ENCODE measurements at regions of chr4 and their contacts with region 1.

Region 1: GRCh38 chr4:12270546-12270945 is 841.9 kb upstream of the HS3ST1 start:
- DNase-seq: no peak
- H3K4me3 ChIP-seq: no peak overlapping the region
- H3K27ac ChIP-seq: no peak overlapping the region
- H3K4me1 ChIP-seq: no peaks in the 10 kb centered on the region
- H3K27me3 ChIP-seq: no peaks in the 10 kb centered on the region
- CTCF ChIP-seq: no peak

Region 2: DNA sequence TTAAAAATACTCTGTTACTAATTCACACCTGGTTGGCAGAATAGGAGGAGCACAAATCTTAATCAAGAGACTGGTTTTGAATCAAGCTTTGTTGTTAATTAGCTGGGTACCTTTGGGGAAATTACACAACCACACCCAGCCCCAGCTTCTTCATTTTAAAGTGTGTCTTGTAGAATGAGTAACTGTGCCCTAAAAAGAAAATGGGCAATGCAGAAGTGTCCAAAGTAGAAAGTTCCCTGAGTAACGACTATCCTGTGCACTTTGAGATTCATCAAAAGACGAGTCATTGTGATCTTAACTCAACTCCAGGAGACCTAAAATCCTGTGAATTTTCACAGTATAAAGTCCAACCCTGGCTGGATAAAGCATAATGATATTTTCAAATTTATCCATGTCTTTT is 49.5 kb before region 1 on chr4:
- CTCF ChIA-PET with region 1: no interaction called
- dilution Hi-C with region 1: loop called (anchors 5 kb)
- in situ Hi-C with region 1: no loop called
- intact Hi-C with region 1: no loop called
- DNase-seq: no peak
- H3K4me3 ChIP-seq: no peak overlapping the region
- H3K27ac ChIP-seq: no peak overlapping the region
- H3K4me1 ChIP-seq: no peaks in the 10 kb centered on the region
- H3K27me3 ChIP-seq: no peaks in the 10 kb centered on the region
- CTCF ChIP-seq: no peak